Transverse colon (tissue), 4 donors: ENCODE measurements at regions of chr10 and their contacts with region 1.

Region 1: GRCh38 chr10:996031-996430 is 7.8 kb downstream of the GTPBP4 start:
- DNase-seq: no peak
- H3K4me3 ChIP-seq: no peak overlapping the region
- H3K27ac ChIP-seq: no peak overlapping the region
- H3K4me1 ChIP-seq: no peaks in the 10 kb centered on the region
- H3K27me3 ChIP-seq: no peaks in the 10 kb centered on the region
- CTCF ChIP-seq: no peak
- EP300 ChIP-seq: no peak
- POLR2A ChIP-seq: no peak

Region 2: GRCh38 chr10:931416-932318 is 64.4 kb before region 1 on chr10 and contains the start of gene LARP4B:
- in situ Hi-C with region 1: no loop called
- intact Hi-C with region 1: loop called (anchors 1 kb)
- DNase-seq: peak; percentile 97
- H3K4me3 ChIP-seq: peak within 1 kb of the TSS; percentile 89 to 98 (median 93)
- H3K27ac ChIP-seq: peak within 1 kb of the TSS; percentile 96 to 99 (median 98)
- H3K4me1 ChIP-seq: peaks cover 17 to 44% (median 33%) of the 10 kb centered on the region in 4 donors
- H3K27me3 ChIP-seq: no peaks in the 10 kb centered on the region
- CTCF ChIP-seq: no peak
- EP300 ChIP-seq: no peak
- POLR2A ChIP-seq: peak; percentile 80
- total RNA-seq, gene LARP4B: 89.2 to 148 (median 96.4) TPM

Region 3: DNA sequence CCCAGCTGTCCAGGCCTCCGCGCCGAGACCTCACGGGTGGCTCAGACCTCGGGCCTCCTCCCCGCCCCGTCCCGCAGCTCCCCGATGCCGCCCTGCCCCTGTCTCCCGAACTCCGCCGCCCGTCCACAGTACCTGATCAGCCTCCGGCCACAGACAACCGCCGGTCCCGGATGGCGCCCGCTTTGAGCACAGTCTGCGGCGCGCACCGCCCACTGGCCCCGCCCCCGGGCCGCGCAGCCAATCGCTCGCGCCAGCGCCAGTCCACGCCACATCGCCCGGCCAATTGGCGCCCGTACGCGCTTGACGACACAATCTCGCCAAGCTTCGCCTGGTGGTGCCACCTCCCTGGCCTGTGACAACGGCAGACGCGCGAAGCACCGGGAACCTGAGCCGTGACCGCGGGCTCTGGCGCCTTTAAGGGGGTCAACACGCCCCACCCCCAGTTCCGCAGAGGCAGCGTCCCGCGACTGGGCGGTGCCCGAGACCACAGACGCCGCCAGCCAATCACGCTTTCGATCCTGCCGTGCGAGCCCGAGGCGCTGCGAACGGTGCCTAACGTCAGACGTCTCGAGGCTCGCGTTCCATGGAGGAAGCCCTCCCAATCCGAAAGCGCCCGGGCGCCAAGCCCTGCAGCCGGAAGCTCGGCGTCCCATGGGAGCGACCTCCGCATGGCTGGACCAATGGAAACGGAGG is 52.8 kb after region 1 on chr10 and contains the start of gene IDI1:
- in situ Hi-C with region 1: no loop called
- intact Hi-C with region 1: no loop called
- DNase-seq: peak; percentile 97
- H3K4me3 ChIP-seq: peak within 1 kb of the TSS; percentile 57 to 82 (median 73)
- H3K27ac ChIP-seq: peak within 1 kb of the TSS; percentile 98 to 100 (median 99)
- H3K4me1 ChIP-seq: peaks cover 11 to 41% (median 23%) of the 10 kb centered on the region in 4 donors
- H3K27me3 ChIP-seq: no peaks in the 10 kb centered on the region
- CTCF ChIP-seq: peak in 1 of 5 experiments; percentile 25
- EP300 ChIP-seq: no peak
- POLR2A ChIP-seq: peak; percentile 97
- total RNA-seq, gene IDI1: 31.1 to 81.5 (median 57.1) TPM